Dendritic cell treated with granulocyte-macrophage colony-stimulating factor and Interleukin-4, amounts not matched to agents 40 ng/mL and 50 ng/mL, for 4 days (primary cell): ENCODE measurements at regions of chr15 and their contacts with region 1.

Region 1: DNA sequence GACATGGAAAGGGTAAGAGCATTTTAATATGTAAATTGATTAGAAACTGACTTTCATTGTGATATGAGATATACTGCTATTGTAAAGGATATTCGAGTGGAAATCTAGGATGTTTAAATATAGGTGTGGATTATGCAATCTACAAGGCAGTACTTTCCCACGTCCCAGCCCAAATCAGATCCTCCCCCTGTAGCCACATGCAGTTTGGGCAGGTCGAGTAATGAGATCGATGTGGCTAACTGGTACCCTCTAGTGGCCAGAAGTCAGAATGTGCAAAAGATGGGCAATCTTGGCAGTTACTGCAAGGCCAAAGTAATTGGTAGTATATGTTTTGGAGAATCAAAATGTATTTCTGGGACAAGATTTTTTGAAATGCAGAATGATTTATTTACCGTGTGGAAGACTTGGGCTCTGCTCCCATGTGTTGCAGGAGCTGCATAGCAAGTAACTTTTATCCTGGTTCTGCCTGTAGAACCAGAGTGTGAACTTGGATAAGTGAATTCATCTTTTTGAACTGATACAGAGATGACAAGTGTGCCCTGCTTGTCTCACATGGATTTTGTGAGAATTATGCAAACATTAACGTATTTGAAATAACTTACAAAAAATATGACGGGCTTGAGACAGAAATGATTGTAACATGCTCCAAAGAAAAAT is 94.5 kb upstream of the ADAMTSL3 start:
- H3K4me3 Mint-ChIP-seq: no peak overlapping the region
- H3K27ac Mint-ChIP-seq: no peak overlapping the region
- H3K4me1 Mint-ChIP-seq: no peaks in the 10 kb centered on the region
- H3K27me3 Mint-ChIP-seq: no peaks in the 10 kb centered on the region

Region 2: GRCh38 chr15:83248151-83249029 is 311.0 kb before region 1 on chr15:
- intact Hi-C with region 1: loop called (anchors 2 kb)
- H3K4me3 Mint-ChIP-seq: no peak overlapping the region
- H3K27ac Mint-ChIP-seq: no peak overlapping the region
- H3K4me1 Mint-ChIP-seq: no peaks in the 10 kb centered on the region
- H3K27me3 Mint-ChIP-seq: peaks cover 32% of the 10 kb centered on the region

Region 3: DNA sequence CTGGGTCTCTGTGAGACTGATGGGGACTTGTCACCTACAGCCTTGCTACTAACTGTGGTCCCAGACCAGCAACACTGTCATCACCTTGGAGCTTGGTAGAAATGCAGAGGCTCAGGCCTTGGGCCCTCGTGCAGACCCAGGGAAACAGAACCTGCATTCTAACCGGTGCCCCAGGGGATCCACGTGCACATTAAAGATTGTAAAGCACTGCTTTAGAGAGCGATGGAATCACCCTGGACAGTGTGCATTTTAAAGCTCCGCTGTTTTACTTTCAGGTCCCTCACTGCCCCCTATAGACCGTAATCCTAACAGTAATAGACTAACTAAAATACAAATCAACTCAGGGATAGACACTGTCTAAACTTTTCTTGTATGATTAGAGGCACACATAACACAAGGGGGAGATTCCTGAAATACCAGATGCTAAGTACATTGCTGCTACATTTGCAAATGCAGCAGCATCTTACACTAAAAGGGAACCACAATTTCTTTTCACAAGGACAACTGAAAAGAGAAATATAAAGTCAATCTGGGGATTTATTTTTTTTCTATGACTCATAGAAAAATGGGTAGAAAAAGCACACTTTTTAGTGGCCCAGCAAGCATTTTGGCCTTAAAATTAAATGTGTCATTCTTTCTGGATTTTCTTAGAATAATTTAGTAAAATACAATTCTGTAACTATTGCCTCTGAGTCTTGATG is 122.8 kb before region 1 on chr15:
- intact Hi-C with region 1: loop called (anchors 1 kb)
- H3K4me3 Mint-ChIP-seq: no peak overlapping the region
- H3K27ac Mint-ChIP-seq: no peak overlapping the region
- H3K4me1 Mint-ChIP-seq: peaks cover 2% of the 10 kb centered on the region
- H3K27me3 Mint-ChIP-seq: peaks cover 16% of the 10 kb centered on the region

Region 4: DNA sequence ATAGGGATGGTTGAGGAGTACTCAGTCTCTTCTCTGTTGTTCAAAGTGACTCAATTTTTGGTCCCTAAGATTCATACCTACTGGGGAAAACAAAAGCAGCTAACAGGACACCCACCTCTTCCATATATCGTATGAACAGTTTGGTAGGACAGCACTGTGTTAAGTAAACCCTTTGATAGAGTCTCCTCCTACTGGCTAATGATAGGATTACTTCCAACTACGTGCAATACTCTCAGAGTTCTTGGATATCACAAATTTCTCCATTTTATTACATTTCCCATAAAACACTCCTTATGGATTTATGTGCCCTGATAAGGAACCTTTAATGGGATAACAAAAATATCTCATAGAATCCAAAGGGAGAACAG is 475.9 kb after region 1 on chr15:
- intact Hi-C with region 1: loop called (anchors 10 kb)
- H3K4me3 Mint-ChIP-seq: no peak overlapping the region
- H3K27ac Mint-ChIP-seq: no peak overlapping the region
- H3K4me1 Mint-ChIP-seq: no peaks in the 10 kb centered on the region
- H3K27me3 Mint-ChIP-seq: peaks cover 3% of the 10 kb centered on the region